ENCODE measurements at regions of chr18 and their contacts with region 1.

Region 1: GRCh38 chr18:12308386-12309100 is 502 bp downstream of the TUBB6 start:
- DNase-seq: peak; percentile 75 to 89 (median 87)
- ATAC-seq: peak; percentile 76
- H3K4me3 ChIP-seq: peak overlapping the region; percentile 86
- H3K27ac ChIP-seq: peak overlapping the region; percentile 91
- H3K4me1 ChIP-seq: peaks cover 44 to 52% of the 10 kb centered on the region in 2 experiments
- H3K27me3 ChIP-seq: no peaks in the 10 kb centered on the region
- CTCF ChIP-seq: no peak
- EP300 ChIP-seq: no peak
- POLR2A ChIP-seq: peak; percentile 67
- RAD21 ChIP-seq: no peak

Region 2: GRCh38 chr18:12295901-12296386 is 12.6 kb before region 1 on chr18:
- CTCF ChIA-PET with region 1: no interaction called
- POLR2A ChIA-PET with region 1: interaction called, 14 read pairs
- in situ Hi-C with region 1: no loop called
- intact Hi-C with region 1: no loop called
- DNase-seq: peak in 3 of 4 experiments; percentile 32 to 77 (median 66)
- ATAC-seq: peak; percentile 80
- H3K4me3 ChIP-seq: no peak overlapping the region
- H3K27ac ChIP-seq: peak overlapping the region; percentile 4; the same call in 2 of the 3 replicates
- H3K4me1 ChIP-seq: peaks cover 12 to 18% of the 10 kb centered on the region in 2 experiments; a peak in 4 of 5 replicates
- H3K27me3 ChIP-seq: no peaks in the 10 kb centered on the region
- CTCF ChIP-seq: no peak
- EP300 ChIP-seq: no peak; the same call in 1 of the 2 replicates
- POLR2A ChIP-seq: no peak
- RAD21 ChIP-seq: no peak

Region 3: DNA sequence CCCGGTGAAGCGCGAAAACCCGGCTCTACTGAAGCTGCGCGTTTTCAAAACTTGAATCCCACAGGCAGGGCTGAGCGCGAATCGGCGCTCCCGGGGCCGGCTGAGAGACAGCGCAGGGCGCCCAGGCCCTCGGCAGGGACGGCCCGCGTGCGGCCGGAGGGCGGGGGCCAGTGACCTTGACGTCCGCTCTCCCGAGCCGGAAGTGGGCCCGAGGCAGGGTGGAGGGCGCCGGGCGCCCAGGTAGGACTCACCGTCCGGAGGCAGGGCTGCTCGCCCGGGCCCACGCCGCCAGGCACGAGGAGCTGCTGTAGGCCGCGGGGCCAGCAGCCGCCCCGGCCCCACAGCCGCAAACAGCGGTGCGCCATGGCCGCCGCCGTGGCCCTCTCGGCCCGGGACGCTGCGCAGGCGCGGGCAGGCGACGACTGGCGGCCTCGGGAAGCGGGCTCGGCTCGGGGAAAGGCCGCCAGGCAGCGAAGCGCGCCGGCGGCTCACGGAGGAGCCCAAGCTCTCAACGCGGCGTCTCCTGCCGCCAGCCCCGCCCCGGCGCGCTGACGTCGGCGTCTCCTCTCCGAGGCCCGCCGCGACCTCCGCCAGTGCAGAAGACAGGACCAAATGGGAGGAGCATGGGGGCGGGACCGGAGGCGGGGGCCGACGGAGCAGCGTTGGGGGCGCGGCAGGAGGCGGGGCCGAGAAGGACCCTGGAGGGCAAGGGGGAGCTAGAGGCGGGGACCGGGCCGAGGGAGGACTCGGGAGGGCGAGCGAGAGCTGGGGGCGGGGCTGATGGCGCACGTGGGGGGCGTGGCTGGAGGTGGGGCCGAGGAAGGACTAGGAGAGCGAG is 68.4 kb after region 1 on chr18 and contains the start of gene AFG3L2:
- CTCF ChIA-PET with region 1: no interaction called
- POLR2A ChIA-PET with region 1: interaction called, 3 read pairs
- in situ Hi-C with region 1: no loop called
- intact Hi-C with region 1: loop called (anchors 5 kb)
- DNase-seq: peak; percentile 97 to 99 (median 98)
- ATAC-seq: peak; percentile 89
- H3K4me3 ChIP-seq: peak within 1 kb of the TSS; percentile 81
- H3K27ac ChIP-seq: peak within 1 kb of the TSS; percentile 100
- H3K4me1 ChIP-seq: peaks cover 28 to 33% of the 10 kb centered on the region in 2 experiments
- H3K27me3 ChIP-seq: no peaks in the 10 kb centered on the region
- CTCF ChIP-seq: no peak; a peak in 1 of 6 replicates
- EP300 ChIP-seq: no peak
- POLR2A ChIP-seq: peak; percentile 62
- RAD21 ChIP-seq: no peak
- polyA plus RNA-seq, gene AFG3L2: 24.1 to 25.6 TPM

Measured in K562 (cell line).